Heart left ventricle (tissue), 16 donors: ENCODE measurements at regions of chr3 and their contacts with region 1.

Region 1: GRCh38 chr3:144900366-144900765 is 928.7 kb downstream of the DIPK2A start:
- DNase-seq: no peak
- ATAC-seq: no peak
- H3K4me3 ChIP-seq: no peak overlapping the region
- H3K27ac ChIP-seq: no peak overlapping the region
- H3K4me1 ChIP-seq: no peaks in the 10 kb centered on the region
- H3K27me3 ChIP-seq: no peaks in the 10 kb centered on the region
- CTCF ChIP-seq: no peak
- POLR2A ChIP-seq: no peak

Region 2: GRCh38 chr3:144756704-144757440 is 143.5 kb before region 1 on chr3:
- intact Hi-C with region 1: no loop called
- DNase-seq: peak in 1 of 5 donors; percentile 45
- ATAC-seq: no peak
- H3K4me3 ChIP-seq: no peak overlapping the region
- H3K27ac ChIP-seq: no peak overlapping the region
- H3K4me1 ChIP-seq: no peaks in the 10 kb centered on the region
- H3K27me3 ChIP-seq: no peaks in the 10 kb centered on the region
- CTCF ChIP-seq: no peak
- POLR2A ChIP-seq: no peak

Region 3: GRCh38 chr3:144931590-144931989 is 31.2 kb after region 1 on chr3:
- intact Hi-C with region 1: loop called in 1 of 10 experiments (anchors 2 kb)
- DNase-seq: no peak
- ATAC-seq: no peak
- H3K4me3 ChIP-seq: no peak overlapping the region
- H3K27ac ChIP-seq: no peak overlapping the region
- H3K4me1 ChIP-seq: no peaks in the 10 kb centered on the region
- H3K27me3 ChIP-seq: no peaks in the 10 kb centered on the region
- CTCF ChIP-seq: no peak
- POLR2A ChIP-seq: no peak